K562 (cell line): ENCODE measurements at regions of chr6 and their contacts with region 1.

Region 1: GRCh38 chr6:2738373-2738979 is 12.2 kb downstream of the MYLK4 start:
- DNase-seq: peak; percentile 64 to 86 (median 68)
- ATAC-seq: peak; percentile 88
- H3K4me3 ChIP-seq: no peak overlapping the region
- H3K27ac ChIP-seq: no peak overlapping the region
- H3K4me1 ChIP-seq: peaks cover 8 to 31% of the 10 kb centered on the region in 2 experiments; a peak in 4 of 5 replicates
- H3K27me3 ChIP-seq: no peaks in the 10 kb centered on the region
- CTCF ChIP-seq: peak; percentile 91 to 96 (median 91)
- EP300 ChIP-seq: no peak
- POLR2A ChIP-seq: no peak
- RAD21 ChIP-seq: peak; percentile 97 to 98

Region 2: GRCh38 chr6:2688416-2689064 is 49.9 kb before region 1 on chr6:
- CTCF ChIA-PET with region 1: no interaction called
- POLR2A ChIA-PET with region 1: no interaction called
- in situ Hi-C with region 1: no loop called
- intact Hi-C with region 1: no loop called
- DNase-seq: peak in 1 of 4 experiments; percentile 21
- ATAC-seq: no peak
- H3K4me3 ChIP-seq: no peak overlapping the region
- H3K27ac ChIP-seq: no peak overlapping the region
- H3K4me1 ChIP-seq: peaks cover 0 to 6% of the 10 kb centered on the region in 2 experiments; a peak in 1 of 5 replicates
- H3K27me3 ChIP-seq: peaks cover 26 to 39% of the 10 kb centered on the region in 2 experiments
- CTCF ChIP-seq: no peak
- EP300 ChIP-seq: no peak
- POLR2A ChIP-seq: no peak
- RAD21 ChIP-seq: no peak

Region 3: GRCh38 chr6:2765166-2765895 is 26.9 kb after region 1 on chr6 and contains the start of gene WRNIP1:
- CTCF ChIA-PET with region 1: interaction called, 4 read pairs
- POLR2A ChIA-PET with region 1: interaction called, 14 read pairs
- in situ Hi-C with region 1: no loop called
- intact Hi-C with region 1: loop called (anchors 1 kb)
- DNase-seq: peak; percentile 83 to 100 (median 92)
- ATAC-seq: peak; percentile 93
- H3K4me3 ChIP-seq: peak within 1 kb of the TSS; percentile 78
- H3K27ac ChIP-seq: peak within 1 kb of the TSS; percentile 85
- H3K4me1 ChIP-seq: peaks cover 37 to 39% of the 10 kb centered on the region in 2 experiments
- H3K27me3 ChIP-seq: no peaks in the 10 kb centered on the region
- CTCF ChIP-seq: peak; percentile 74 to 95 (median 78)
- EP300 ChIP-seq: no peak
- POLR2A ChIP-seq: no peak
- RAD21 ChIP-seq: peak in 1 of 2 experiments; percentile 17; a peak in 2 of 4 replicates
- polyA plus RNA-seq, gene WRNIP1: 13.2 to 15.9 TPM

Region 4: DNA sequence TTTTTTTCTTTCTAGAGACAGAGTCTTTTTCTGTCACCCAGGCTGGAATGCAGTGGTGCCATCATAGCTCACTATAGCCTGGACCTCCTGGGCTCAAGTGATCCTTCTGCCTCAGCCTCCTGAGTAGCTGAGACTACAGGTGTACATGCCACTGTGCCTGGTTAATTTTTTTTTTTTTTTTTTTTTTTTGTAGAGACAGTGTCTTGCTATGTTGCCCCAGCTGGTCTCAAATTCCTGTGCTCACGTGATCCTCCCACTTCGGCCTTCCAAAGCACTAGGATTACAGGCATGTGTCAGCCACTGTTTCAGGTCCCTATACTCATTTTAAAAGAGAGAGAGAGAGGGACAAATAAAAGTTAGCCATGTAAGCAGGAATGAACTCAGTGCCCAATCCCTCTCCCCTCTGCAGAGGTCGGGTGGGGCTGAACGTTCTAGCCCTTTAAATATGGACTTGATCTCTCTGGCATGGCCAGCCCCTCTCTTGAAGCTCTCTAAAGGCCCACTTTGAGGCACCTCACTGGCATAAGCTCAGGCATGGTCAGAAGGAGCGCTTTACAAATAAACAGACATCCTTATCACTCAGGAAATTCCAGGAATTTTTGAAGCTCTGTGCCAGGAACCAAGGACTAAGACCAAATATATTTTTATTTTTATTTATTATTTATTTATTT is 112.1 kb after region 1 on chr6:
- CTCF ChIA-PET with region 1: no interaction called
- POLR2A ChIA-PET with region 1: no interaction called
- in situ Hi-C with region 1: no loop called
- intact Hi-C with region 1: loop called (anchors 1 kb)
- DNase-seq: no peak
- ATAC-seq: no peak
- H3K4me3 ChIP-seq: no peak overlapping the region
- H3K27ac ChIP-seq: peak overlapping the region; percentile 35; the same call in 1 of the 3 replicates
- H3K4me1 ChIP-seq: peaks cover 19 to 53% of the 10 kb centered on the region in 2 experiments
- H3K27me3 ChIP-seq: no peaks in the 10 kb centered on the region
- CTCF ChIP-seq: no peak
- EP300 ChIP-seq: no peak
- POLR2A ChIP-seq: no peak
- RAD21 ChIP-seq: no peak

Region 5: DNA sequence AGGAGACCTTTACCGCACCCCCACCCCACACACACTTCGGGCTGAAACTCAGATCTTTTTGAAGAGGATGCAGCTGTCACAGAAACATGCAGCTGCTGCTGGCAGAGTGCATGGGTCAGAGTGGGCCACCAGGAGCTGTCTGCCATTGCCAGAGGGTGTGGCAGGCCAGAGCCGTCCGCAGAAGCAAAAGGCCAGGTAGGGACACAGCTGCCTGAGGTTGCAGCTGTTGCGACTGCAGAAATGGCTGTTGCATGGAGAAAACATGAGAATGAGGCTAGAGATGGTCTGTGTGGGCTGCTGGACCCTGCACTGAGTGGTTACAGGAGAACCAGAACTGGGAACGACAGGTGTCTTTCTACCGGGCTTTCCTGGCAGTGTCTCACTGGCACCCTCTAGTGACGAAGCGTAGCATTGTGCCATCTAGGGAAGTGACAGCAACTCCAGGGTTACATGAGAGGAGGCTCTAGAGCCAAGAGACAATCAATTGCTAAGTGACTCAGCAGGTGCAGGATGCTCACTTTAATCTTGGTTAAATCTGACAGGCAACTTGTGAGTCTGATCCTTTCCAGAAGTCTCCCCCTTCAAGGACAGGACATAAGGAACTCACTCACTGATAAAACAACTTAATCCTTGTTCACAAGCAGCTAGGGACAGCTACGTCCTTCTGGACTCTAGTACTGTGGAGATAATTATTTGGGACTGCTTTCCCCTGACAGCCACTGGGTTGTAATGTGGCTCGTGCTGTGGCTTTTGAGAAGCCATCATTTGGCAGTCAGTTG is 193.7 kb after region 1 on chr6:
- CTCF ChIA-PET with region 1: no interaction called
- POLR2A ChIA-PET with region 1: no interaction called
- in situ Hi-C with region 1: no loop called
- intact Hi-C with region 1: loop called (anchors 5 kb)
- DNase-seq: peak; percentile 94 to 97 (median 94)
- ATAC-seq: peak; percentile 99
- H3K4me3 ChIP-seq: no peak overlapping the region
- H3K27ac ChIP-seq: 0 out of 3 replicates have a peak overlapping the region, but pooled peaks have one; percentile 2
- H3K4me1 ChIP-seq: peaks cover 9 to 13% of the 10 kb centered on the region in 2 experiments; a peak in 4 of 5 replicates
- H3K27me3 ChIP-seq: no peaks in the 10 kb centered on the region
- CTCF ChIP-seq: peak; percentile 98 to 100 (median 99)
- EP300 ChIP-seq: peak; percentile 97
- POLR2A ChIP-seq: no peak
- RAD21 ChIP-seq: peak; percentile 98